BJ (cell line): ENCODE measurements at regions of chr2 and their contacts with region 1.

Region 1: DNA sequence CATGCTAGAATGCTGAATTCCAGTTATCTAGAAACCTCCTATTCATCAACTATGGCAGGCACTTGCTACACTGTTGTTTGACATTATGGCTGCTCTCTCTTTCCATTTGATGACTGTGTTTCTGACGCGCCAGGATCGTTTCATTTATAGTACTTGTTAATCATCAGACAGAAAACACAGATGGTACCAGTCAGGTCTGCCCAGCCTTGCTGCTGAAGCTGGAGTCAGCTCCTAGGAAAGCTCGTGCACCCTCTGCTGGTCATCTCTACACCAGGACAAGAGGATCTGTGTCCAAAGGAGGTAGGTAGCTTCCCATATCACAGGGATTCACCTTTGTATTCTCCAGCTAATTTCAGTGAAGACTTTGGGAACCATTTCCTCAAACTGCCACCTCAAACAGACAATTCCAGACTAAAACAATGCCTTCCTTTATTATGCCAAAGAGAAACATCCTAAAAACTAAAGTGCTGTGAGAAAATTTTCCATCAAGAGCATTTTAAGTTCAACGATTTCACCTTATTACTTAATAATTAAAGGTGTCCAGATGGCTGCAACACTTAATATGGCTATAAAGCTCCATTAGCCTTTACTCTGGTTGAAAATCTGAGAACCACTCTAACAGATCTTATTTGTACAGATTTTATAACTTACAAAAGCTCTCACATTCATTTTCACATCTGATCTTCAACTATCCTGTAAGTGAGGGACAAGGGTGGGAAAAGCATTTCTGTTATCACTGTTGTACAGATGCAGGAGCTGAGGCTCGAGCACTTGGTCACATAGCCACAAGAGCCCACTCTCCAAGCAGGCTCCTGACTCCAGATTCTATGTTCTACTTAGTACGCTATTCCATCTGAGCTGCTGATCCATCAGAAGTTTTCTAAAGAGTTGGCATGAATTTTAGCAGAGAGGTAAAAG is 17.5 kb downstream of the METTL8 start:
- DNase-seq: peak; percentile 78
- H3K4me3 ChIP-seq: no peak overlapping the region
- H3K27me3 ChIP-seq: no peaks in the 10 kb centered on the region
- CTCF ChIP-seq: peak; percentile 92

Region 2: DNA sequence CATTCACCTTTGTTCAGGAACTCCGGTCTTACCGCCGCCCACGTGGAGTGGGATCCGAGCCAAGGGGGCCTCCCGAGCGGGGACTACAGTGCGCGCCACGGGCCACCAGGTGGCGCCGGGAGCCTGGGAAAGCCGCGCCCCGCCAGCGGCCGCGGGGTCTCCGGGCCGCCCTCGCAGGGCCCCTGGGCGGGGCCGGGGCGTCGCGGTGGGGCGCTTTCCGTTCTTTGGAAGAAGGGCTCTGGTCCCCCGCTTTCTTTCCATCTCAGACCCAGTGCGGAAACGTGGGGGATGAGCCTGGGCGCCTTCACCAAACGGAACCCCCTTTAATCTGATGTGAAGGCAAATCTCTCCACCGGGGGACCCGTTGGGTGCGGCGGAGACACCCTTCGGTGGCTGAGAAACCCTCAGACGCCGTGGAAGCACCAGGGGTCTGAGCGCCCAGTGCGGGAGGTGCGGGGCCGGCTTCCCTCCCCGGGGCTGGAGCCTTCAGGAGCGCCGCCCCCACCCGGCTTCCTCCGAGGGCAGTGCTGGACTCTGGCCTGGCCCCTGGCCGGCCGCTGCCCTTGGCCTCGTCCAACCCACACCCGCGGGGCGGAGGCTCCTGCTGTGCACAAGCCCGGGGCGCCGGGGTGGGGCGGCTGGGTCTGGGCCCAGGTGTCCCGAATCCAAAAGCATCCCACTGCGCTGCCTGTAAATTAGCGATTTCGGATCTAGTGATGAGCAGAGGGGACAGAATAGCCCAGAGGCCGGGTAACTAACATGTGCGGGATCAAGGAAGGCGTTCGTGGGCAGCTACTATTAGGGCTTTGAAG is 442.6 kb before region 1 on chr2:
- CTCF ChIA-PET with region 1: interaction called, 23 read pairs
- POLR2A ChIA-PET with region 1: interaction called, 6 read pairs
- DNase-seq: no peak
- H3K4me3 ChIP-seq: peak overlapping the region; percentile 75
- H3K27me3 ChIP-seq: no peaks in the 10 kb centered on the region
- CTCF ChIP-seq: peak; percentile 73

Region 3: GRCh38 chr2:171160119-171160955 is 255.9 kb before region 1 on chr2 and contains the start of gene TLK1:
- CTCF ChIA-PET with region 1: interaction called, 19 read pairs
- POLR2A ChIA-PET with region 1: no interaction called
- DNase-seq: no peak
- H3K4me3 ChIP-seq: peak within 1 kb of the TSS; percentile 85
- H3K27me3 ChIP-seq: no peaks in the 10 kb centered on the region
- CTCF ChIP-seq: no peak
- polyA plus RNA-seq, gene TLK1: 6.4 and 18.2 TPM in 2 replicates

Region 4: GRCh38 chr2:171430516-171431410 is 14.5 kb after region 1 on chr2:
- CTCF ChIA-PET with region 1: interaction called, 10 read pairs
- POLR2A ChIA-PET with region 1: no interaction called
- DNase-seq: no peak
- H3K4me3 ChIP-seq: no peak overlapping the region
- H3K27me3 ChIP-seq: no peaks in the 10 kb centered on the region
- CTCF ChIP-seq: no peak